ENCODE measurements at regions of chr5 and their contacts with region 1.

Region 1: GRCh38 chr5:73792687-73793320 is 166.8 kb downstream of the ARHGEF28 start:
- DNase-seq: peak; percentile 41
- ATAC-seq: peak; percentile 79
- H3K4me3 ChIP-seq: no peak overlapping the region
- H3K27ac ChIP-seq: no peak overlapping the region
- H3K4me1 ChIP-seq: peaks cover 6% of the 10 kb centered on the region
- H3K27me3 ChIP-seq: no peaks in the 10 kb centered on the region; a peak in 1 of 4 replicates
- CTCF ChIP-seq: peak; percentile 96 to 99 (median 98); a peak in 5 of 6 replicates
- EP300 ChIP-seq: no peak
- POLR2A ChIP-seq: no peak
- RAD21 ChIP-seq: peak; percentile 99

Region 2: DNA sequence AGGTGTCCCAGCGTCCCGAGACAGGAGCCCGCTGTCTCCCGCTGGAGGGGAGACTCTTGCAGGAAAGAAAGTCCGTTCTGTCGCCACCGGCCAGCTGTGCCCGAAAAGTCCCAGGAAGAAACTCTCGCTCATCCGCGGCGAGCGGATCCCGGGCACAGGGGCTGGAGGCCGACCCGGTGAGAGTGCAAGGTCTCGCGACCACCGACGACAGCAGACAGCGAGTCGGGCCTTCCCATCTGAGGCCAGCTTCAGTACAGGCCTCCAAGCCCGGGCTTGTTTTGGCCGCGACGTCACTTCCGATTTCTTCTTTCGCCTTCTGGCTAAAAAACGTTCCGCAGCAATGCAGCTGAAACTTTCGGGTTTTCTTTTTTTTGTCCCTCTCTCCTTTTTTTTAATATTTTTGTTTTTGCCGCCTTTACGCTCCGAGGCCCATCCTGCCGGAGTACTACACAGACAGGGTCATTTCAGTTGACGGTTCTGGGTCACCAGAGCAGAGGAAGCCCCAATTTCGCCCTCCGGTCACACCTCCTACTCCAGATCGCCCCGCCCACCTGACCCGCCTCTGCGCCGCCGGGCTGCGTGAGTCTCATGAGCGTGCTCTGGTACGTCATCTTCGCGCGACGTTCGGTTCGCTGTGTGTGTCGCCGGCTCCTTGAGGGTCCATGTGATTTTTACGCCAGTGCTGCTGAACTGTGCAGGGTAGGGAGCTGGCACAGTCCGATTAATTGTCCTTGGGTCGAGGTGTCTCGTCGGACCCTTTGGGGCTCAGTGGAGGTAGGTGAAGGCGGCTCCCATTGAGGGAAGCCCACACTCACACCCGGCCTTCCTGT is 227.4 kb before region 1 on chr5 and contains the starts of genes ANKRA2 and UTP15:
- CTCF ChIA-PET with region 1: interaction called, 15 read pairs
- POLR2A ChIA-PET with region 1: no interaction called
- RAD21 ChIA-PET with region 1: interaction called, 6 read pairs
- SMC1A ChIA-PET with region 1: interaction called, 6 read pairs
- in situ Hi-C with region 1: no loop called
- intact Hi-C with region 1: no loop called
- DNase-seq: peak; percentile 90
- ATAC-seq: peak; percentile 94
- H3K4me3 ChIP-seq: peak within 1 kb of the TSS; percentile 90
- H3K27ac ChIP-seq: peak within 1 kb of the TSS; percentile 86
- H3K4me1 ChIP-seq: no peaks in the 10 kb centered on the region
- H3K27me3 ChIP-seq: no peaks in the 10 kb centered on the region
- CTCF ChIP-seq: no peak
- EP300 ChIP-seq: 0 out of 4 replicates have a peak, but pooled peaks of 1 of the 2 experiments have one; percentile 11
- POLR2A ChIP-seq: peak; percentile 90
- RAD21 ChIP-seq: no peak
- polyA plus RNA-seq, gene ANKRA2: 19.4 to 31.3 TPM
- polyA plus RNA-seq, gene UTP15: 22.5 to 24.9 TPM

Region 3: GRCh38 chr5:73663860-73664240 is 129.0 kb before region 1 on chr5:
- CTCF ChIA-PET with region 1: interaction called, 3 read pairs
- POLR2A ChIA-PET with region 1: no interaction called
- RAD21 ChIA-PET with region 1: interaction called, 5 read pairs
- SMC1A ChIA-PET with region 1: interaction called, 6 read pairs
- in situ Hi-C with region 1: no loop called
- intact Hi-C with region 1: loop called (anchors 5 kb)
- DNase-seq: peak; percentile 76
- ATAC-seq: peak; percentile 64
- H3K4me3 ChIP-seq: no peak overlapping the region
- H3K27ac ChIP-seq: peak overlapping the region; percentile 69
- H3K4me1 ChIP-seq: peaks cover 30% of the 10 kb centered on the region
- H3K27me3 ChIP-seq: no peaks in the 10 kb centered on the region
- CTCF ChIP-seq: no peak
- EP300 ChIP-seq: peak in 1 of 2 experiments; percentile 33; a peak in 1 of 4 replicates
- POLR2A ChIP-seq: no peak
- RAD21 ChIP-seq: no peak

Region 4: GRCh38 chr5:73716284-73716808 is 76.5 kb before region 1 on chr5:
- CTCF ChIA-PET with region 1: interaction called, 9 read pairs
- POLR2A ChIA-PET with region 1: no interaction called
- RAD21 ChIA-PET with region 1: interaction called, 7 read pairs
- SMC1A ChIA-PET with region 1: interaction called, 16 read pairs
- in situ Hi-C with region 1: no loop called
- intact Hi-C with region 1: no loop called
- DNase-seq: no peak
- ATAC-seq: peak; percentile 96
- H3K4me3 ChIP-seq: no peak overlapping the region
- H3K27ac ChIP-seq: no peak overlapping the region
- H3K4me1 ChIP-seq: no peaks in the 10 kb centered on the region
- H3K27me3 ChIP-seq: no peaks in the 10 kb centered on the region
- CTCF ChIP-seq: 0 out of 6 replicates have a peak, but pooled peaks of 1 of the 3 experiments have one; percentile 2
- EP300 ChIP-seq: no peak
- POLR2A ChIP-seq: no peak
- RAD21 ChIP-seq: no peak

Region 5: DNA sequence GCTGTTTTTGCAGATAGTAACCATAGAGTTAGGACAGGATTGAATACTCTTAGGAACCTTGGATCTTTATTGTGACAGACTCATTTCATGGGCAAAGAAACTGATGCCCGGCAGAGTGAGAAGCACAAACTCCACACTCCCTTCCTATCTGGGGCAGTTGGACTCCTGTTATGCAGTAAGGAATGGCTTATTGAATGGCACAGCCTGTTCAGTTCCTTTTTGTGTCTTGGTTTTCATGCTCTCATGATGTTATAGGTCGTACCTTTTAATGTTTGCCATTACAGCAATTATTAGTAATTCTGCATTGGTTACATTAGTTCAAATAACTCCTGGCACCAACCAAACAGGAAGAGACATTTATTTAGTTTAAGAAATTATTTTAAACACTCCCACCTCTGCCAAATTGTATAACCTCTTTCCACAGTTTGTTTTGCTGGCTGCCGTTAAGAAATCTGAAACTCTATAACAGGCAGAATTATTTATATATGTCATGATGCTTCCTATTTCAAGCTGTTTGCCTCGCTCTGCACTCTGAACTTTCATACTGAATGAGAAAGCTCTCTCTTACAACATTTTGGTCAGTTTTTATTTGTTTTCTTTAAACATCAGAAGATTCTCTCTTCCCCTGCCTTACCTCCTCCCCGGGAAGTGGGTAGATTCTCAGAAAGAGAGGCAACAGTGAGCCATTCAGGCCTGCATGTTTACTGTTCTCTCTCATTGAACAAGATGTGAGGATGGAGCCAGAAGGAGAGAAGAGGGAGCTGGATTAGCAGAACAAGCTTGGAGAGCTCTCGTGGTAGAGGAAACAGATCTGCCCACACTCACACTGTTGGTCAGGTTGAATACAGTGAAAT is 22.4 kb before region 1 on chr5:
- CTCF ChIA-PET with region 1: interaction called, 5 read pairs
- POLR2A ChIA-PET with region 1: no interaction called
- RAD21 ChIA-PET with region 1: no interaction called
- SMC1A ChIA-PET with region 1: interaction called, 10 read pairs
- in situ Hi-C with region 1: no loop called
- intact Hi-C with region 1: no loop called
- DNase-seq: no peak
- ATAC-seq: no peak
- H3K4me3 ChIP-seq: no peak overlapping the region
- H3K27ac ChIP-seq: no peak overlapping the region
- H3K4me1 ChIP-seq: no peaks in the 10 kb centered on the region
- H3K27me3 ChIP-seq: no peaks in the 10 kb centered on the region
- CTCF ChIP-seq: no peak
- EP300 ChIP-seq: no peak
- POLR2A ChIP-seq: no peak
- RAD21 ChIP-seq: no peak